OCI-LY7 (cell line): ENCODE measurements at regions of chr16 and their contacts with region 1.

Region 1: DNA sequence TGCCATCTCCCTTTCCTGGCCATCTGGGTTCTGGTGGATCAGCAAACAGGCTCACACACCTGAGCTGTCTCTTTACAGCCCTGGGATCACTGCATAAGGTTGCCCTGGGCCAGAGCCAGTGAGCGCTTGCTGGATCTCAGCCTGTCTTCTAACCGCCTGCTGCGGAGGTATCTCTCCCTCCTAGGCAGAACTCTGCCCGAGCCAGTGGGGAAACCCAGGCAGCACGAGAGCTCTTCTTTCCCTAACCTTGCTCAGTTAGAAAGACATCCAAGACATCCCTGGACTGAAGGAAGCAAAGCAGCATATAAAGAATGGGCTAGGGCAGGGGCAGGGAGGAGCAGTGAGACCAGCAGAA is 6.4 kb downstream of the HAS3 start:
- DNase-seq: no peak
- H3K4me3 ChIP-seq: no peak overlapping the region
- H3K27ac ChIP-seq: no peak overlapping the region
- H3K4me1 ChIP-seq: no peaks in the 10 kb centered on the region
- CTCF ChIP-seq: no peak

Region 2: DNA sequence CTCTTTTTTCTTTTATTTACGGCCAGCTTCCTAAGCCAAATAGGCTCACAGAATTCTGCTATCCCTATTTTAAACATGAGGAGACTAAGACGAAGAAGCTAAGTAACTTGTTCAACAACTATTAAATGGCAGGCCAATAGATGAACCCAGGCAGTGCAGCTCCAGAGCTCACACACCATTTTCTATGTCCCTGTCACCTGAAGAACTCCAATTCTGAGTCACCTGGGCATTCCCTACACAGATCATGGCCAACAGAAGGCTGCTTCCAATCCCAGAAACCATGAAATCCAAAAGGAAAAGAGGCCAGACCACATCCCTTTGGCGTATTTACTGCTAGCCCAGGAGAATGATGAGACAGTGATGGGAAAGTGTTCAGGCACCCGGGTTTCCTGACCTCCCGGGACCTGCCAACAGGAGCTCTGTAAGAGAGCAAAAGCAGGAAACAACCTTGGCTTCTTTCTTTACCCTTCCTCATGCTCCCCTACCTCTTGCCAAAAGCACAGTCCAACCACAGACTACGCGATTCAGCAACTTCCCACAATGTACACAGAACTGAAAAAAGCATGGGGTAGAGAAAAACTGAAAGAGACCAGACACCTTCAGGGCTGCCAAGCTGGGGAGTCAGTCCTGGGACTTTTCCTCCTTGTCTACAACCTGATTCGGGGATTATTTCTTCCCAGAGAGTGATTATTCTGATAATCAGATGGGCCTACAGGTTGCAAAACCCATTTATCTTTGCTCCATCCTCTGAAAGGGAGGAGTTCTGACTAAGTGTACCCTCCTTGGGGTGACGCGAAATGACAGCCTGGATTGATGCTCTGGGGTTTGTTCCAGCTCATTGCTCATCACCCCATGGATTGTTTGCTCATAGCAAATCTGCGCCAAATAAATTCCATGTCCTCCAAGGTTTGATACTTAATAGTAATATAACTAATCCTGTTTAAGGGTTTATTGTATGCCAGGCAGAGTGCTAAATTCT is 54.2 kb before region 1 on chr16:
- CTCF ChIA-PET with region 1: no interaction called
- POLR2A ChIA-PET with region 1: no interaction called
- intact Hi-C with region 1: no loop called
- DNase-seq: no peak
- H3K4me3 ChIP-seq: no peak overlapping the region
- H3K27ac ChIP-seq: no peak overlapping the region
- H3K4me1 ChIP-seq: no peaks in the 10 kb centered on the region
- CTCF ChIP-seq: no peak

Region 3: GRCh38 chr16:69253870-69254341 is 142.1 kb after region 1 on chr16:
- CTCF ChIA-PET with region 1: no interaction called
- POLR2A ChIA-PET with region 1: interaction called, 12 read pairs
- intact Hi-C with region 1: no loop called
- DNase-seq: no peak
- H3K4me3 ChIP-seq: no peak overlapping the region
- H3K27ac ChIP-seq: no peak overlapping the region
- H3K4me1 ChIP-seq: peaks cover 3% of the 10 kb centered on the region
- CTCF ChIP-seq: no peak